ENCODE measurements at regions of chr6 and their contacts with region 1.

Region 1: GRCh38 chr6:121032268-121033006 is 301.8 kb downstream of the TBC1D32 start:
- DNase-seq: no peak
- H3K4me3 ChIP-seq: no peak overlapping the region
- H3K4me3 Mint-ChIP-seq: no peak overlapping the region
- H3K27ac Mint-ChIP-seq: no peak overlapping the region
- H3K4me1 ChIP-seq: no peaks in the 10 kb centered on the region
- H3K4me1 Mint-ChIP-seq: no peaks in the 10 kb centered on the region
- H3K27me3 ChIP-seq: no peaks in the 10 kb centered on the region
- H3K27me3 Mint-ChIP-seq: no peaks in the 10 kb centered on the region
- CTCF ChIP-seq: no peak

Region 2: GRCh38 chr6:120468486-120468885 is 564.0 kb before region 1 on chr6:
- CTCF ChIA-PET with region 1: no interaction called
- POLR2A ChIA-PET with region 1: no interaction called
- intact Hi-C with region 1: loop called (anchors 5 kb)
- DNase-seq: no peak
- H3K4me3 ChIP-seq: no peak overlapping the region
- H3K4me3 Mint-ChIP-seq: no peak overlapping the region
- H3K27ac Mint-ChIP-seq: no peak overlapping the region
- H3K4me1 ChIP-seq: no peaks in the 10 kb centered on the region
- H3K4me1 Mint-ChIP-seq: no peaks in the 10 kb centered on the region
- H3K27me3 ChIP-seq: no peaks in the 10 kb centered on the region
- H3K27me3 Mint-ChIP-seq: no peaks in the 10 kb centered on the region
- CTCF ChIP-seq: no peak

Region 3: GRCh38 chr6:121055572-121056163 is 23.2 kb after region 1 on chr6:
- CTCF ChIA-PET with region 1: no interaction called
- POLR2A ChIA-PET with region 1: no interaction called
- intact Hi-C with region 1: no loop called
- DNase-seq: peak in 1 of 2 experiments; percentile 60
- H3K4me3 ChIP-seq: no peak overlapping the region
- H3K4me3 Mint-ChIP-seq: no peak overlapping the region
- H3K27ac Mint-ChIP-seq: no peak overlapping the region
- H3K4me1 ChIP-seq: no peaks in the 10 kb centered on the region
- H3K4me1 Mint-ChIP-seq: no peaks in the 10 kb centered on the region
- H3K27me3 ChIP-seq: no peaks in the 10 kb centered on the region
- H3K27me3 Mint-ChIP-seq: no peaks in the 10 kb centered on the region
- CTCF ChIP-seq: peak; percentile 64 to 69

Region 4: DNA sequence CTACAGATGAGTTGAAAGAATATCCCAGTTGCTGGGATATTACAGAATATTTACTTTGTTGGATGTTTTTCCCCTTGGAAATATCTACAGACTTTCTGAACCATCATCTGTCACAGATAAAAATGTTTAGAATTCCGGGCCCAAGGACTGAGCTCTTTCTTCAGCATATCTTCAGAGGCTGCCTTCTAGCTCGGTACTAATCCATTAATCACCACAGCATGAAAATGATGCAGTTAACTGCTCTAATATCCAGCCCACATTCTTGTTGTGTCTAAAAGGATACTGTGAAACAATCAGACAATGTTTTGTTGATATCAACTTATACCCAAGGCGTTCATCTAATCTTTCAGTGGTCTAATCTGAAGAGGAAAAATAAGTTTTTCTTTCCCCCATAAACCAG is 54.4 kb after region 1 on chr6:
- CTCF ChIA-PET with region 1: no interaction called
- POLR2A ChIA-PET with region 1: no interaction called
- intact Hi-C with region 1: no loop called
- DNase-seq: no peak
- H3K4me3 ChIP-seq: no peak overlapping the region
- H3K4me3 Mint-ChIP-seq: no peak overlapping the region
- H3K27ac Mint-ChIP-seq: no peak overlapping the region
- H3K4me1 ChIP-seq: no peaks in the 10 kb centered on the region
- H3K4me1 Mint-ChIP-seq: no peaks in the 10 kb centered on the region
- H3K27me3 ChIP-seq: no peaks in the 10 kb centered on the region
- H3K27me3 Mint-ChIP-seq: no peaks in the 10 kb centered on the region
- CTCF ChIP-seq: no peak